Psoas muscle (tissue), 8 donors: ENCODE measurements at regions of chr14 and their contacts with region 1.

Region 1: GRCh38 chr14:81400852-81401251 is 728 bp upstream of the STON2 start:
- DNase-seq: peak; percentile 81 to 85
- ATAC-seq: peak; percentile 82 to 89 (median 88)
- H3K4me3 ChIP-seq: no peak overlapping the region
- H3K27ac ChIP-seq: peak overlapping the region; percentile 88
- H3K4me1 ChIP-seq: peaks cover 40% of the 10 kb centered on the region
- H3K27me3 ChIP-seq: no peaks in the 10 kb centered on the region
- CTCF ChIP-seq: no peak

Region 2: DNA sequence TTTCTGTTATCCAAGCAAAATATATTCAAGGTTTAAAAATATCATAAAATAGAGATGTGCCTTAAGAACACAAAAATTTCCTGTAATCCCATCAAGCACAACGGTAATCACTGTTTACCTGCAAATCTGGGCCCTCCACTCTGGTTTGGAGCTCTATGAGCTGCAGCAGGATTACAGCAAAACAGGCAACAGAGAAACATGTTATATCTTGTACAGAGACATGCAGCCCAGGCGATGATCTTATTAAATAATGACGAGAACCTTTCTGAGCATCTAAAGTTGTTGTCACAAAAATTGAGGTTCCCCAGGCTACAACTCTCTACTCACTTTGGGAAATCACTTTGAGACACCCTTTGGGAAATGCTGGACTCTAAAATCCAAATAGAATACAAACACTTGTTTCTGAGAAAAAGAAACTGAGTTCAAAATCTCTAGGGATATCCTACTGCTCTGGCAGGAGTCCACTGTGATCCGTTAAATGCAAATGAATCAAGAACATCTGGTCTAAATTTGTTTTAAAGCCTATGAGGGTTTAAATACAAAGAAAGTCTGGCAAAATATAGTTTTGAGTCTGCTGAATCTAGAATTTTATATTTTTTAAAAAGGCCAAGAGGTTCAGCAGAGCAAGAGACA is 37.0 kb before region 1 on chr14:
- intact Hi-C with region 1: loop called in 1 of 2 experiments (anchors 5 kb)
- DNase-seq: no peak
- ATAC-seq: no peak
- H3K4me3 ChIP-seq: no peak overlapping the region
- H3K27ac ChIP-seq: peak overlapping the region; percentile 36
- H3K4me1 ChIP-seq: peaks cover 13% of the 10 kb centered on the region
- H3K27me3 ChIP-seq: no peaks in the 10 kb centered on the region
- CTCF ChIP-seq: no peak

Region 3: GRCh38 chr14:81436296-81437138 is 35.7 kb after region 1 on chr14:
- intact Hi-C with region 1: loop called in 1 of 2 experiments (anchors 5 kb)
- DNase-seq: peak; percentile 85 to 90
- ATAC-seq: peak; percentile 96 to 98 (median 97)
- H3K4me3 ChIP-seq: peak overlapping the region; percentile 71
- H3K27ac ChIP-seq: peak overlapping the region; percentile 74
- H3K4me1 ChIP-seq: peaks cover 21% of the 10 kb centered on the region
- H3K27me3 ChIP-seq: no peaks in the 10 kb centered on the region
- CTCF ChIP-seq: no peak

Region 4: GRCh38 chr14:81453166-81453766 is 52.4 kb after region 1 on chr14:
- intact Hi-C with region 1: loop called in 1 of 2 experiments (anchors 5 kb)
- DNase-seq: peak; percentile 40 to 69
- ATAC-seq: peak; percentile 39 to 70 (median 65)
- H3K4me3 ChIP-seq: peak overlapping the region; percentile 35
- H3K27ac ChIP-seq: peak overlapping the region; percentile 82
- H3K4me1 ChIP-seq: peaks cover 34% of the 10 kb centered on the region
- H3K27me3 ChIP-seq: no peaks in the 10 kb centered on the region
- CTCF ChIP-seq: peak; percentile 91